Activated naive CD4-positive, alpha-beta T cell treated with anti-CD3 and anti-CD28 coated beads for 36 hours (primary cell): ENCODE measurements at regions of chr1 and their contacts with region 1.

Region 1: DNA sequence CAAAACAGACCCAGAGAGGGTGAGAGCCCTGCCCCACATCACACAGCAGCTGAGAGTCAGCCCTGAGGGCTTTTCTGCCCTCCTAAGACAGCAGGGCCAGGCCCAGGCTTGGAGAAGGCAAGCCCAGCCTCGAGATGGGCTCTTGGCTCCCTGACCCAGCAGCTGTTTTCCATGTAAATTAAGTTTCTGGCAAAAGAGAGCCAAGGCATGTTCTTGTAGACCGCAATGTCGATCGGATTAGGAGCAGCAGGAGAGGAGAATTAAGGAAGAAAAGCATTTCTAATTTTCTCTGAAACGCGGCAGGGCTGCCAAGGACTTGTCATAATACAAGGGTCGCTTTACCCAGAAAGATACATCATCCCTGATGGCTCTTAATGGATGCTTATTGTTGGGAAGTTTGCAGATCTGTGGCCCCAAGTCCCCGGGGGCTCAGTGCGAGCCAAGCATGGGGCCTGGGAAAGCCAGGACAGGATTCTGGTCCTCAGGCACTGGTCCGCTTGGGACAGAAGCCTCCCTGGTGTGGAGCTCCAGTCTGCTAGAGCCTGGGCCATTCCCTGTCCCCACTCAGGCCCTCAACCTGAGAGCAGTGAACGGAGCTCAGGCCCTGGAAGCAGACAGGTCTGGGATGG is 62.8 kb downstream of the DMRTB1 start:
- DNase-seq: no peak
- H3K4me3 Mint-ChIP-seq: no peak overlapping the region
- H3K27ac Mint-ChIP-seq: no peak overlapping the region
- H3K4me1 Mint-ChIP-seq: no peaks in the 10 kb centered on the region
- H3K27me3 Mint-ChIP-seq: no peaks in the 10 kb centered on the region

Region 2: GRCh38 chr1:53541761-53542550 is 19.9 kb after region 1 on chr1:
- CTCF ChIA-PET with region 1: no interaction called
- intact Hi-C with region 1: loop called (anchors 2 kb)
- DNase-seq: peak; percentile 20
- H3K4me3 Mint-ChIP-seq: no peak overlapping the region
- H3K27ac Mint-ChIP-seq: no peak overlapping the region
- H3K4me1 Mint-ChIP-seq: no peaks in the 10 kb centered on the region
- H3K27me3 Mint-ChIP-seq: no peaks in the 10 kb centered on the region